ENCODE measurements at regions of chr12 and their contacts with region 1.

Region 1: GRCh38 chr12:55619354-55620138 is 17.1 kb upstream of the OR10P1 start:
- DNase-seq: peak; percentile 92
- ATAC-seq: peak; percentile 97
- H3K4me3 ChIP-seq: no peak overlapping the region
- H3K27ac ChIP-seq: no peak overlapping the region
- H3K4me1 ChIP-seq: no peaks in the 10 kb centered on the region
- H3K27me3 ChIP-seq: peaks cover 8% of the 10 kb centered on the region
- CTCF ChIP-seq: peak; percentile 97
- POLR2A ChIP-seq: no peak
- RAD21 ChIP-seq: peak; percentile 73

Region 2: GRCh38 chr12:54993161-54993835 is 626.2 kb before region 1 on chr12:
- CTCF ChIA-PET with region 1: no interaction called
- POLR2A ChIA-PET with region 1: no interaction called
- dilution Hi-C with region 1: no loop called
- in situ Hi-C with region 1: no loop called
- intact Hi-C with region 1: loop called (anchors 5 kb)
- DNase-seq: peak; percentile 60
- ATAC-seq: peak; percentile 96
- H3K4me3 ChIP-seq: no peak overlapping the region
- H3K27ac ChIP-seq: no peak overlapping the region
- H3K4me1 ChIP-seq: no peaks in the 10 kb centered on the region
- H3K27me3 ChIP-seq: no peaks in the 10 kb centered on the region
- CTCF ChIP-seq: peak; percentile 76
- POLR2A ChIP-seq: no peak
- RAD21 ChIP-seq: peak; percentile 74

Region 3: GRCh38 chr12:55188974-55189556 is 430.5 kb before region 1 on chr12:
- CTCF ChIA-PET with region 1: interaction called, 13 read pairs
- POLR2A ChIA-PET with region 1: no interaction called
- dilution Hi-C with region 1: no loop called
- in situ Hi-C with region 1: loop called (anchors 10 kb)
- intact Hi-C with region 1: loop called (anchors 1 kb)
- DNase-seq: peak; percentile 76
- ATAC-seq: peak; percentile 91
- H3K4me3 ChIP-seq: no peak overlapping the region
- H3K27ac ChIP-seq: no peak overlapping the region
- H3K4me1 ChIP-seq: no peaks in the 10 kb centered on the region
- H3K27me3 ChIP-seq: no peaks in the 10 kb centered on the region
- CTCF ChIP-seq: peak; percentile 69
- POLR2A ChIP-seq: no peak
- RAD21 ChIP-seq: peak; percentile 73

Region 4: DNA sequence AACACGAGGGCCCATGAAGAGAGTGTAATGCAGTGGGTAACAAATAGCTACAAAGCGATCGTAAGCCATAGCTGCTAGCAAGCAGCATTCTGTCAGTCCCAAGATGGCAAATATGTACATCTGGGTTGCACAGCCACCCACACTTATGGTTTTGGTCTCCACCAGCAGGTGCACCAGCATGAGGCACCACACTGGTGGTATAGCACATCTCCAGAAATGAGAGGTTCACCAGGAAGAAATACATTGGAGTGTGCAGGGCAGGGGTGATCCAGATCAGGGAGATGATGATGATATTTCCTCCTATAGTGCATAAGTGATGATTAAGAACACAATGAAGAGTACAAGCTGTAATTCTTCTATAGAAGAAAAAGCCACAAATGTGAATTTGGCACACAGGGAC is 425.2 kb before region 1 on chr12:
- CTCF ChIA-PET with region 1: interaction called, 13 read pairs
- POLR2A ChIA-PET with region 1: no interaction called
- dilution Hi-C with region 1: no loop called
- in situ Hi-C with region 1: loop called (anchors 10 kb)
- intact Hi-C with region 1: loop called (anchors 1 kb)
- DNase-seq: no peak
- ATAC-seq: no peak
- H3K4me3 ChIP-seq: no peak overlapping the region
- H3K27ac ChIP-seq: no peak overlapping the region
- H3K4me1 ChIP-seq: no peaks in the 10 kb centered on the region
- H3K27me3 ChIP-seq: no peaks in the 10 kb centered on the region
- CTCF ChIP-seq: no peak
- POLR2A ChIP-seq: no peak
- RAD21 ChIP-seq: no peak

Region 5: GRCh38 chr12:55631733-55632132 is 12.2 kb after region 1 on chr12:
- CTCF ChIA-PET with region 1: no interaction called
- POLR2A ChIA-PET with region 1: no interaction called
- dilution Hi-C with region 1: no loop called
- in situ Hi-C with region 1: no loop called
- intact Hi-C with region 1: no loop called
- DNase-seq: no peak
- ATAC-seq: no peak
- H3K4me3 ChIP-seq: no peak overlapping the region
- H3K27ac ChIP-seq: no peak overlapping the region
- H3K4me1 ChIP-seq: no peaks in the 10 kb centered on the region
- H3K27me3 ChIP-seq: peaks cover 31% of the 10 kb centered on the region
- CTCF ChIP-seq: no peak
- POLR2A ChIP-seq: no peak
- RAD21 ChIP-seq: no peak